Activated B cell treated with CpG ODN at 0.5 μM for 24 hours (primary cell): ENCODE measurements at regions of chr7 and their contacts with region 1.

Region 1: DNA sequence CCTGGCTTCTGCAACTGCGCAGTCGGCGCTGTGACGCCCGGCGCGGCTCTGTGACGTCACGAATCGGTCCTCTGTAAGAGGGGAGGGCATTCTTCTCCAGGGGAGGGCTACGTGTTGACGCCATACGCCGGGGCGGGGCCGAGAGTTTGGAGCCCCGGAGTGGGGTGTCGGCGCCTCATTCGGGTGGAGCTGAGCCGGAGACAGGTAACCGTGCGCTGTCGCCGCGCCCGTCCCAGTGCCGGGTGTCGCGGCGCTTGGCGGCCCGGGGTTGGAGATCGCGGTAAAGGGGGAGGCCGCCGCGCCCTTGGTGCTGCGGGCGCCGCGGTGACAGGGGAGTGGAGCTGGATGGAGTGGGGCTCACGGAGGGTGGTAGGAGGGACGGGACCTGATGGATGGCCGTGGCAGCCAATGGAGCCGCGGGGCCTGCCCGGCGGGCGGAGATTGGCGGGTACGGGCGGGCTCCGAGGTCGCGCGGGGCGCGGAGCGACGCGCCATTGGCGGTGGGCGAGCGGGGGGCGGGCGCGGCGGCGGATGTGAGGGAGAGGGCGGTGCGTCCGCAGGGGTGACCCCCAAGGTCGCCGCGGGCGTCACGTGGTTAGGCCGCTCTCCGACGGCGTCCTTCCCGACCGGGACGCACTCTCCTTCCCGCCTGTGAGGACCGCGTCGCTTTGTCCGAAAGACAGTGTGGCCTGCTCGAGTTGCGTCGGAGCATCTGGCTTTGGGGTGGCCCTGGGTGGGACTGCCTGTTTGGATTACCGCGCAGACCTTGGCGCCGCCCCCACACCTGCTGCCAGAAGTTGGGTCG is at the start of gene OGDH:
- DNase-seq: peak; percentile 100
- ATAC-seq: peak; percentile 94
- H3K4me3 Mint-ChIP-seq: peak within 1 kb of the TSS; percentile 98
- H3K27ac Mint-ChIP-seq: peak within 1 kb of the TSS; percentile 98
- H3K4me1 Mint-ChIP-seq: peaks cover 45% of the 10 kb centered on the region
- H3K27me3 Mint-ChIP-seq: no peaks in the 10 kb centered on the region
- CTCF ChIP-seq: no peak
- total RNA-seq, gene OGDH: 79.5 and 81.7 TPM in 2 replicates

Region 2: GRCh38 chr7:44257618-44258422 is 348.8 kb before region 1 on chr7:
- CTCF ChIA-PET with region 1: no interaction called
- POLR2A ChIA-PET with region 1: no interaction called
- intact Hi-C with region 1: no loop called
- DNase-seq: peak; percentile 41
- ATAC-seq: peak; percentile 79
- H3K4me3 Mint-ChIP-seq: peak overlapping the region; percentile 15
- H3K27ac Mint-ChIP-seq: peak overlapping the region; percentile 77
- H3K4me1 Mint-ChIP-seq: peaks cover 35% of the 10 kb centered on the region
- H3K27me3 Mint-ChIP-seq: no peaks in the 10 kb centered on the region
- CTCF ChIP-seq: no peak

Region 3: DNA sequence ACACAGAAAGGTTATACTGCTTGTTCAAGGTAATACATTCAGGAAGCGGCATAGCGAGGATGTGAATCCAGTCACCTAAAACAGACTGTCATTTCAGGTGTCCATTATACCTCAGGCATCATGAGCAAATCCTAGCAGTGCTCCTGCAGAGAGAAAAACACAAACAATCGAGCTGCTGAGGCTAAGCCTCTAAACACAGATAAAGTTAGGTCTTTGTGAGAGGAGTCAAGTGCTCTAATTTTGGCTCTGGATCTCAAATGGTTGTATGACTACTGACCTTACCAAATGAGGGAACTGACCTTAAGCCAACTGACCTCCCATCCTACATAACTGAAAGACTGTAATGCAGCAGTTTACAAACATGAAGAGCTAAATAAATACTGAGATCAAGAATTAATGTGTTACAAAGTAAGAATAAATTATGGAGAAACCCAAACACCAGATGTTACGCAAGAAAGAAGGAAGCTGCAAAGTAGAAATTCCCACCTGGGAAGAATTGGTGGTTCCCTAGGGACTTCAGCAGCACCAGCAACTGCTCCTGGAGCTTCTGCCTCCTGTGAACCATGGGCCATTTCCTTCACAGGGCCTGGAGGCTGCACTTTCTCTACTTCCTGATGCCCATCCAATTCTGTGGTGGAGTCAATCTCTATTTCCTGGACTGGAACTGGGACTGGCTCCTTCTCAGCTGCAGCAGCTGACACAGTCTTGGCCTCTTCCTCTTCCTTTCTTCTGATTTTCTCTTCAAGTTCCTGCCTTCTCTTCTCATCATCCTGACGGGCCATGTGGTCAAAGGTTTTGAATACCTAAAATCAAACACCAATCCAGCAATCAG is 122.0 kb before region 1 on chr7:
- CTCF ChIA-PET with region 1: no interaction called
- POLR2A ChIA-PET with region 1: no interaction called
- intact Hi-C with region 1: no loop called
- DNase-seq: no peak
- ATAC-seq: no peak
- H3K4me3 Mint-ChIP-seq: no peak overlapping the region
- H3K27ac Mint-ChIP-seq: no peak overlapping the region
- H3K4me1 Mint-ChIP-seq: peaks cover 53% of the 10 kb centered on the region
- H3K27me3 Mint-ChIP-seq: no peaks in the 10 kb centered on the region
- CTCF ChIP-seq: no peak

Region 4: DNA sequence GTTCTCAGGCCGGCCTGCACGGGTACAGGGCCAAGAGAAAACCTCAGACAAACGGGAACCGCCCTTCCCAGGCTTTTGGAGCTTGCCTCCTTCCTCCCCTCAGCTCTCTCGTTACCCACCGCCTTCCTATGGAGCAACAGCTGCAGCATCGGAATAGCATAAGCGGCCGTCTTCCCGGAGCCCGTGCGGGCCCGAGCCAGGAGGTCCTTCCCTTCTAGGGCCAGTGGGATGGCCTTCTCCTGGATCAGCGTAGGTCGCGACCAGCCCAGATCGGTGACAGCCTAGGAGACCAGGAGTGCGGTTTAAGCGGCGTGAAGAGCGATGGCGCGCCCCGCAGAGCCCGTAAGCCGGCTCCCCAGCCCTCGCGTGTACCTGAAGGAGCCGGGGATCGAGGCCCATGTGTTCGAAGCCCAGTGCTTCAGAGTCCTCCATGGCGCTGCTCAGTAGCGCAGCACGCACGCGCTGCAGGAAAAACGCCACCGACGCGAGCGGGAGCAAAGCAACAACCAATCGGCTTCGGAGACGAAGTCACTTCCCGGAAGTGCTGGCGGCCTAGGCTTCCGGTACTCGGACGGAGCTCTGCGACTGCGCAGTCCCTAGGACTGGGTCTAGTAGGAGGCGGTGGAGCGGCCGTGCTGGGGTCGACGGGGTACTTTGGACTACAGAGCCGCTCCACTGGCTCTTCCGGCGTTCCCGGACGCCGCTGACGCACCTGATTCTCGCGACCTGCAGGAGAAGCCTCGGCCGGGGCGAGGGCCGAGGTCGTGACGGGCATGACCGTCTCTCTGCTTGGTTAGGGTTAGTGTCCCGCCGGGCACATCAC is 33.0 kb before region 1 on chr7 and contains the start of gene DDX56:
- CTCF ChIA-PET with region 1: no interaction called
- POLR2A ChIA-PET with region 1: interaction called, 12 read pairs
- intact Hi-C with region 1: loop called (anchors 1 kb)
- DNase-seq: peak; percentile 82
- ATAC-seq: peak; percentile 97
- H3K4me3 Mint-ChIP-seq: peak within 1 kb of the TSS; percentile 94
- H3K27ac Mint-ChIP-seq: peak within 1 kb of the TSS; percentile 94
- H3K4me1 Mint-ChIP-seq: peaks cover 35% of the 10 kb centered on the region
- H3K27me3 Mint-ChIP-seq: no peaks in the 10 kb centered on the region
- CTCF ChIP-seq: no peak
- total RNA-seq, gene DDX56: 92.6 and 99.7 TPM in 2 replicates

Region 5: DNA sequence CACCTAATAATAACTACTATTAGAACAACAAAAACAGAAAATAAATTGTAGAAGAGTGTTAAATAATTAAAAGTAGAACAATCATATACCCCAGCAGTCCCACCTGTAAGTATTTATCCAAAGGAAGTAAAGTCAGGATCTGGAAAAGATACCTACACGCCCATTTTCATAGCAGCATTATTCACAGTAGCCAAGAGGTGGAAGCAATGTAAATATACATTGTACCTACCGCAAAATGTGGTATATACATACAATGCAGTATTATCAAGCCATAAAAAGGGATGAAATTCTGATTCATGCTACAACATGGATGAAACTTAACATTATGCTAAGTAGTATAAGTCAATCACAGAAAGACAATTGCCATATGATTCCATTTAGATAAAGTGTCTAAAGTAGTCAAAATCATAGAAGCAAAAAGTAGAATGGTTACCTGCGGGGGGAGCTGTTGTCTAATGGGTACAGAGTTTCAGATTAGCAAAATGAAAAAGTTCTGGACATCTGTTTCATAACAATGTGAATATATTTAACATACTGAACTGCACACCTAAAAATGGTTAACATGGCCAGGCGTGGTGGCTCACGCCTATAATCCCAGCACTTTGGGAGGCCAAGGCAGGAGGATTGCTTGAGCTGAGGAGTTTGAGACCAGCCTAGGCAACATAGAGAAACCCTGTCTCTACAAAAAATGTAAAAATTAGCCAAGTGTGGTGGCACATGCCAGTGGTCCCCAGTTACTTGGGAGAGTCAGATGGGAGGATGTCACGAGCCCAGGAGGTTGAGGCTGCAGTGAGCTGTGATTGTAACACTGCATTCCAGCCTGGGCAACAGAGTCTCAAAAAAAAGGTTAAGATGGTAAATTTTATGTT is 18.6 kb before region 1 on chr7:
- CTCF ChIA-PET with region 1: interaction called, 3 read pairs
- POLR2A ChIA-PET with region 1: interaction called, 45 read pairs
- intact Hi-C with region 1: loop called (anchors 2 kb)
- DNase-seq: no peak
- ATAC-seq: peak; percentile 79
- H3K4me3 Mint-ChIP-seq: no peak overlapping the region
- H3K27ac Mint-ChIP-seq: no peak overlapping the region
- H3K4me1 Mint-ChIP-seq: peaks cover 6% of the 10 kb centered on the region
- H3K27me3 Mint-ChIP-seq: peaks cover 3% of the 10 kb centered on the region
- CTCF ChIP-seq: no peak

Region 6: DNA sequence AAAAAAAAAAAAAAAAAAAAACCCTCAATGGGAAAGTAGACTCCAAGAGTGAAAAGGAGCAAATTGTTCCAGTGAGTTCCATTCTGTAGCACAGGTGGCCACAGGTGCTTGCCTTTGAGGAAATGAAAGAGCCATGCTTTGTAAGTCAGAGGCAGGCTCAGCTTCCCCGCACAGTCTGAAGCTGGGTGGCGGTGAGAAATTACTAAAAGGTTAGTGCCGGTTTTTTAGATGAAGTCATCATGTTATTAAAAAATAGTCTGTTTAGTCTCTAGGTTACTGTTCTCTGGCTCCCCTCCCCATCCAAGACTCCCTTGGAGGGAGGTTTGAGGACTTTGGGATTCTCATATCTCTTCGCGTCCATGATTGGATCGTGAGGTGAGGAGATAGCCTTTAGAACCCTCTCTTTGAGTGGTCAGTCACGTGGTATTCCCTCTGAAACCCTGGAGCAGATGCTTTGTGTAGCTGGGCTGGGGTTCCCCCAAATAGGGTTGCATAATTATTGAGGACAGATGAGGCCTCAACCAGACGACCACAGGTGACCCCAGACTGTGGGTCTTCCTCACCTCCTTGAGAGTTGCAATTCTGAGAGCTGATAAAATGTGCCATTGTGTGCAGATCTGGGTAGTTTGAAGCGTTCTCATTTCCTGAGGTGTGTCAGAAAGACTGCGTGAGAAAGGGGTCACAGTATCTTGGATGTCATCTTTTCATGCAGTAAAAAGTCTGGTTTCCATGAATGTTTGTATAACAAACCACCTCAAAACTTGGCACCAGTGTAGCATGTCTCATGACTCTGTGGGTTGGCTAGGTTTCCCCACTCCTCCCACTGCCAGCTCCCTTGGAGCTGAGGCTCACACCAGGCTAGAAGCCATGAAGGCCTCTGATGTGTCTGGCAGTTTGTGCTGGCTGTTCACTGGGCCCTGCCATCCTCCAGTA is 26.9 kb after region 1 on chr7:
- CTCF ChIA-PET with region 1: interaction called, 6 read pairs
- POLR2A ChIA-PET with region 1: interaction called, 257 read pairs
- intact Hi-C with region 1: loop called (anchors 1 kb)
- DNase-seq: peak; percentile 32
- ATAC-seq: peak; percentile 67
- H3K4me3 Mint-ChIP-seq: peak overlapping the region; percentile 61
- H3K27ac Mint-ChIP-seq: peak overlapping the region; percentile 96
- H3K4me1 Mint-ChIP-seq: peaks cover 96% of the 10 kb centered on the region
- H3K27me3 Mint-ChIP-seq: no peaks in the 10 kb centered on the region
- CTCF ChIP-seq: no peak